ENCODE measurements at regions of chr2 and their contacts with region 1.

Region 1: GRCh38 chr2:23513872-23514793 is 129.2 kb downstream of the KLHL29 start:
- DNase-seq: no peak
- H3K4me3 ChIP-seq: no peak overlapping the region
- H3K4me3 Mint-ChIP-seq: no peak overlapping the region
- H3K27ac ChIP-seq: no peak overlapping the region
- H3K27ac Mint-ChIP-seq: no peak overlapping the region
- H3K4me1 ChIP-seq: no peaks in the 10 kb centered on the region
- H3K4me1 Mint-ChIP-seq: no peaks in the 10 kb centered on the region
- H3K27me3 ChIP-seq: no peaks in the 10 kb centered on the region
- H3K27me3 Mint-ChIP-seq: peaks cover 3 to 4% of the 10 kb centered on the region in 2 donors

Region 2: DNA sequence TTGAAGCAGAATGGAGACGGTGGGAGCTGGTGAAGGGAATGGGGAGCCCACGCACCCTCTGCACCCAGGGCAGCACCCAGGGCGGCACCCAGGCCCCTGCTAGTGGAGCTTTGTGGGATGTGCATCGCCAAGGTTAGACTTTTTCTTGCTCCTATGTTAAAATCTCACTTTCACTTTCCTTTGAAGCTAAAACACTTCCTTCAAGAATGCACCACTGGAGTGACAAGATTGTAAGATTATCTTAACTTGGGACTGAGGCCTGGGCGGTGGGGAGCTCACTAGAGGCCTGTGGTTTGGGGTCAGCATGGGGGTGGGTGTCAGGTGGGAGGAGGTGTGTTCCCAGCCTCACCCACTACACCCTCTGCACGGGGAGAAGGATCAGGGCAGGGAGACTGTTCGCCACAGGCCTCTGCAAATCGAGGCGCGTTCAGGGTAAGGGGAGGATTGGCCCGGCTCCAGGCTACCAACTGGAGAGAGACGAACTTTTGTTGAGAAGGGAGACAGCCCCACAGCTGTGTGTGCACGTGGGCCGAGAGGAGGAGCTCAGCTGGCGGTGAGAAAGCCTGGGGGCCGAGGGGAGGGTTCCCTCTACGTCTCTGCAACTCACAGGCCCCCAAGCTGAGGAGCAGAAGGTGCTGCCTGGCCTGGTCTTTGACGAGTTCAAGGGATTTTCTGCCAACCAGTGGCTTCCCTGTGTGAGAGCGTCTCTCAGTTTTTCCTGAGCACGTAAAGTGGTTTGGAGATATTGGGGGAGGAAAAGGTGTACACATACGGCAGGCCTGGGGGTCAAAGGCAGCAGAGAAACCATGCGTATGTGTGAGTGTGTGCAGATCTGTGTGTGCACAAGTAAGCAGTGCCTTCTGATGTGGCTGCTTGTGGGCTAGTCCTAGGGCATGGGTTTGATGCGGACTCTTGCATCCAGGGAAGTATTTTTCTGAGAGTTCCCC is 18.5 kb after region 1 on chr2:
- CTCF ChIA-PET with region 1: no interaction called
- POLR2A ChIA-PET with region 1: no interaction called
- intact Hi-C with region 1: loop called (anchors 2 kb)
- DNase-seq: peak in 4 of 5 donors; percentile 35 to 49 (median 41)
- H3K4me3 ChIP-seq: peak overlapping the region; percentile 27 to 42
- H3K4me3 Mint-ChIP-seq: peak overlapping the region; percentile 86 to 98 (median 91)
- H3K27ac ChIP-seq: peak overlapping the region; percentile 40
- H3K27ac Mint-ChIP-seq: peak overlapping the region; percentile 83 to 97 (median 95)
- H3K4me1 ChIP-seq: peaks cover 24% of the 10 kb centered on the region
- H3K4me1 Mint-ChIP-seq: peaks cover 19 to 35% (median 26%) of the 10 kb centered on the region in 4 donors
- H3K27me3 ChIP-seq: no peaks in the 10 kb centered on the region
- H3K27me3 Mint-ChIP-seq: no peaks in the 10 kb centered on the region